H1 (cell line): ENCODE measurements at regions of chr10 and their contacts with region 1.

Region 1: DNA sequence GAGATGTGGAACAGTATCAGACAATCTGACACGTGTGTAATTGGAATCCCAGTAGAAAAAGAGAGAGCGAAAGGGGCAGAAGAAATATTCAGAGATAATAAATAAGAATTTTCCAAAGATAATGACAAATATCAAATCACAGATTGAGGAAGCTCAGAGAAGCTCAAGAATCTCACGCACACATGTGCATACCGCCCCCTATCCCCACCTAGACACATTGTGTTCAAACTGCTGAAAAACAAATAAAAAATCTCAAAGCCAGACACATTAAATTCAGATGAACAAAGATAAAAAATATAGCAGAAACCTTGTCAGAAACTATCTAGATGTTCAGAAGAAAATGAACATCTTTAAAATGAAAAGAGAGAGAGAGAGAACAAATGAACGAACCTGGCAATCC is 17.2 kb downstream of the SFR1 start:
- DNase-seq: no peak
- H3K4me3 ChIP-seq: no peak overlapping the region
- H3K27ac ChIP-seq: no peak overlapping the region
- H3K4me1 ChIP-seq: no peaks in the 10 kb centered on the region
- H3K27me3 ChIP-seq: no peaks in the 10 kb centered on the region
- CTCF ChIP-seq: peak in 2 of 3 experiments; percentile 25 to 41; a peak in 2 of 4 replicates
- EP300 ChIP-seq: no peak
- POLR2A ChIP-seq: no peak
- RAD21 ChIP-seq: peak; percentile 44 to 48; a peak in 3 of 4 replicates

Region 2: DNA sequence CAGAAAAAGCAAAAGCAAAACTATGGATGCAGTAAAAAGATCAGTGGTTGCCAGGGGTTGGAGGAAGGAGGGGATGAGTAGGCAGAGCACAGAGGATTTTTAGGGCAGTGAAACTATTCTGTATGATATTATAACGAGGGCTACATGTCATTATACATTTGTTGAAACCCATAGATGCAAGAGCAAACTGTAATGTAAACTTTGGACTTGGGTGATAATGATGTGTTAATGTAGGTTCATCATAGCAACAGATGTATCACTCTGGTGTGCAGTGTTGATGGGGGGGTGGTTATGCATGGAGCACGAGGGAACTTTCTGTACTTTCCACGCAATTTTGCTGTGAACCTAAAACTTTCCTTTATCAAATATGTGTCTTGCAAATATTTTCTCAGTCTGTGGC is 149.1 kb before region 1 on chr10:
- CTCF ChIA-PET with region 1: no interaction called
- POLR2A ChIA-PET with region 1: no interaction called
- DNase-seq: no peak
- H3K4me3 ChIP-seq: no peak overlapping the region
- H3K27ac ChIP-seq: no peak overlapping the region
- H3K4me1 ChIP-seq: no peaks in the 10 kb centered on the region
- H3K27me3 ChIP-seq: no peaks in the 10 kb centered on the region
- CTCF ChIP-seq: no peak
- EP300 ChIP-seq: no peak
- POLR2A ChIP-seq: no peak
- RAD21 ChIP-seq: no peak

Region 3: GRCh38 chr10:104127411-104127810 is 11.8 kb before region 1 on chr10:
- CTCF ChIA-PET with region 1: interaction called, 13 read pairs
- POLR2A ChIA-PET with region 1: interaction called, 21 read pairs
- DNase-seq: peak in 1 of 2 experiments; percentile 54
- H3K4me3 ChIP-seq: no peak overlapping the region
- H3K27ac ChIP-seq: no peak overlapping the region
- H3K4me1 ChIP-seq: no peaks in the 10 kb centered on the region; a peak in 2 of 7 replicates
- H3K27me3 ChIP-seq: no peaks in the 10 kb centered on the region
- CTCF ChIP-seq: peak; percentile 51 to 70 (median 60)
- EP300 ChIP-seq: no peak
- POLR2A ChIP-seq: no peak
- RAD21 ChIP-seq: peak; percentile 50 to 61

Region 4: GRCh38 chr10:104197364-104197763 is 58.1 kb after region 1 on chr10:
- CTCF ChIA-PET with region 1: no interaction called
- POLR2A ChIA-PET with region 1: no interaction called
- DNase-seq: no peak
- H3K4me3 ChIP-seq: no peak overlapping the region
- H3K27ac ChIP-seq: no peak overlapping the region
- H3K4me1 ChIP-seq: no peaks in the 10 kb centered on the region
- H3K27me3 ChIP-seq: no peaks in the 10 kb centered on the region
- CTCF ChIP-seq: no peak
- EP300 ChIP-seq: no peak
- POLR2A ChIP-seq: no peak
- RAD21 ChIP-seq: no peak